ENCODE measurements at regions of chr6 and their contacts with region 1.

Region 1: DNA sequence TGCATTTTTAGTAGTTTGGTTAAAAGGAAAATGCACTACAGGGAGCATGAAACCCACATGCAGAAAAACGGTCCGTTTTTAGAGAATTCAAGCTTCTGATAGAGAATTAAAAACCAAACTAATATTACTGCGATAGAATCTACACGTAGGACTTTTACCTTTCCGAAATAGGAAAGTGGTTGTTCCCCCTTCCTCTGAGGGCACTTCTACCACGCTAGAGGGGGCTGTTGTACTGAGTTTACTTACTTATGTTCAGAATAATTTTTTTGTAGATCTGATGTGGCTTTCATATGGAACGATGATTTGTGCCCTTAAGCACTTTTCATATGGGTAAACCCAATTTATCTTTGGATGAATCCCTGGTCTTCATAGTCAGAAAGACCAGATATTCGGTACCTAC is 264.3 kb upstream of the PLN start:
- DNase-seq: no peak
- H3K4me3 ChIP-seq: no peak overlapping the region
- H3K27ac ChIP-seq: no peak overlapping the region
- H3K4me1 ChIP-seq: peaks cover 0 to 6% (median 0%) of the 10 kb centered on the region in 6 donors
- H3K27me3 ChIP-seq: peaks cover 0 to 4% (median 0%) of the 10 kb centered on the region in 7 donors
- CTCF ChIP-seq: peak in 10 of 11 experiments; percentile 32 to 75 (median 56)
- POLR2A ChIP-seq: no peak

Region 2: DNA sequence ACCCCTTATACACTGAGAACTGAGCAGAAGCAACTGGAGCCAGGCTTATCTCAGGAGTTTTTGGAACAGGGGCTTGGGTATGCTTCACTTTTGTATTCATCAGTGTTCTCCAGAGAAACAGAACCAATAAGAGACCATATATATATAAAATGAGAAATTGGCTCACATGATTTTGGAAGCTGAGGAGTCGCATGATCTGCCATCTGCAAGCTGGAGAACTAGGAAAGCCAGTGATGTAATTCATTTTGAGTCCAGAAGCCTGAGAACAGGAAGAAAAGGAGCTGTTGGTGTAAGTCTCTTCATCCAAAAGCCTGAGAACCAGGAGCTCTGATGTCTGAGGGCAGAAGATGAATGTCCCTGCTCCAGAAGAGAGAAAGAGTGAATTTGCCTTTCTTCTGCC is 104.7 kb before region 1 on chr6:
- intact Hi-C with region 1: no loop called
- DNase-seq: no peak
- H3K4me3 ChIP-seq: no peak overlapping the region
- H3K27ac ChIP-seq: no peak overlapping the region
- H3K4me1 ChIP-seq: no peaks in the 10 kb centered on the region
- H3K27me3 ChIP-seq: no peaks in the 10 kb centered on the region
- CTCF ChIP-seq: no peak
- POLR2A ChIP-seq: no peak

Region 3: DNA sequence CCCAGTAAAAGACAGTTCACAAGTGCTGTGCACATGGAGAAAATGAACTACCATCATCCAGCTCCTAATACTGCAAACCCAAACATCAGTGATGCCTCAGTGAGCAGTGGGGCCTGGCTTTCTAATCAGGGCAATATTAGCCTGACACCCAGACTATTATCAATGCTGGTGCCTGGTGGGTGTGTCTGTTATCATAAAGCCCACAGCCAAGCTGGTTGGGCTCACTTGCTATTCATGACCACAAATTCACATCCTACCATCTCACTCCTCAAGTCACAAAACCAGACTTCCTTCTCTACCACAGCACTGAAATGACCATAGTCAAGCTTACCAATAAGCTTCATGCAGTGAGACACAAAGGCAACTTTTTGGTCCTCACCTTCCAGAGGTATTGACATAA is 83.5 kb after region 1 on chr6:
- intact Hi-C with region 1: no loop called
- DNase-seq: no peak
- H3K4me3 ChIP-seq: no peak overlapping the region
- H3K27ac ChIP-seq: no peak overlapping the region
- H3K4me1 ChIP-seq: no peaks in the 10 kb centered on the region
- H3K27me3 ChIP-seq: no peaks in the 10 kb centered on the region
- CTCF ChIP-seq: no peak
- POLR2A ChIP-seq: no peak

Region 4: GRCh38 chr6:118551063-118552053 is 267.6 kb after region 1 on chr6:
- intact Hi-C with region 1: loop called (anchors 10 kb)
- DNase-seq: no peak
- H3K4me3 ChIP-seq: no peak overlapping the region
- H3K27ac ChIP-seq: no peak overlapping the region
- H3K4me1 ChIP-seq: peaks cover 0 to 48% (median 5%) of the 10 kb centered on the region in 6 donors
- H3K27me3 ChIP-seq: no peaks in the 10 kb centered on the region
- CTCF ChIP-seq: peak in 9 of 11 experiments; percentile 13 to 64 (median 47)
- POLR2A ChIP-seq: no peak

Region 5: DNA sequence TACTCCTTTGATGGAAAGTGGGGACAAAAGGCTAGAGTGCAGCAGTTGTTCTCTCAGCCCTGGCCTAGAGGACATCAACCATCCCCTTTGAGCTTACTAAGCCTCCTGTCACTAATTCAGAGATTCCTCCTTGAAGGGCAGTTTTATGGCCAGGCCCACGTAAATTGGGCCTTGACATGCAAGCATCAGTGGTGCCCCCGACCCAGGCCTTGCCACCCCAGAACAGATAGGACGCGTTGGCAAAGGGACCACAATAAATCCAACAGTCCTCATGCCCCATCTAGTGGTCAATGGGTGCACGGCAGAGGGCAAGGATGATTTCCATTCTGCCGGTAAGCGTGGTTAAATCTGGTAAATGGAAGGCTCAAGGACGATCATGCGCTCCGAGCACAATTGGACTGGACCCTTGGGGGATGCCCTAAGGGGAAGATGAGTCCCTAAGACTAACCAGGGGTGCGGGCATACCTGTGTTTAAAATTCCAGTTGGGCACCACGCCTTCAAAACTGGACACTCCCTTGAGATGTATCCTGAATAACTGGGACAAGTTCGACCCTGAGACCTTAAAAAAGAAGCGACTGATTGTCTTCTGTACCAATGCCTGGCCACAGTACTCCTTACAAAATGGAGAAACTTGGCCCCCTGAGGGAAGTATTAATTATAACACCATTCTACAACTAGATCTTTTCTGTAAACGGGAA is 335.1 kb after region 1 on chr6:
- intact Hi-C with region 1: loop called (anchors 10 kb)
- DNase-seq: peak; percentile 80
- H3K4me3 ChIP-seq: no peak overlapping the region
- H3K27ac ChIP-seq: no peak overlapping the region
- H3K4me1 ChIP-seq: peaks cover 0 to 48% (median 8%) of the 10 kb centered on the region in 6 donors
- H3K27me3 ChIP-seq: no peaks in the 10 kb centered on the region
- CTCF ChIP-seq: peak; percentile 81 to 92 (median 87)
- POLR2A ChIP-seq: no peak